ENCODE measurements at regions of chr2 and their contacts with region 1.

Region 1: DNA sequence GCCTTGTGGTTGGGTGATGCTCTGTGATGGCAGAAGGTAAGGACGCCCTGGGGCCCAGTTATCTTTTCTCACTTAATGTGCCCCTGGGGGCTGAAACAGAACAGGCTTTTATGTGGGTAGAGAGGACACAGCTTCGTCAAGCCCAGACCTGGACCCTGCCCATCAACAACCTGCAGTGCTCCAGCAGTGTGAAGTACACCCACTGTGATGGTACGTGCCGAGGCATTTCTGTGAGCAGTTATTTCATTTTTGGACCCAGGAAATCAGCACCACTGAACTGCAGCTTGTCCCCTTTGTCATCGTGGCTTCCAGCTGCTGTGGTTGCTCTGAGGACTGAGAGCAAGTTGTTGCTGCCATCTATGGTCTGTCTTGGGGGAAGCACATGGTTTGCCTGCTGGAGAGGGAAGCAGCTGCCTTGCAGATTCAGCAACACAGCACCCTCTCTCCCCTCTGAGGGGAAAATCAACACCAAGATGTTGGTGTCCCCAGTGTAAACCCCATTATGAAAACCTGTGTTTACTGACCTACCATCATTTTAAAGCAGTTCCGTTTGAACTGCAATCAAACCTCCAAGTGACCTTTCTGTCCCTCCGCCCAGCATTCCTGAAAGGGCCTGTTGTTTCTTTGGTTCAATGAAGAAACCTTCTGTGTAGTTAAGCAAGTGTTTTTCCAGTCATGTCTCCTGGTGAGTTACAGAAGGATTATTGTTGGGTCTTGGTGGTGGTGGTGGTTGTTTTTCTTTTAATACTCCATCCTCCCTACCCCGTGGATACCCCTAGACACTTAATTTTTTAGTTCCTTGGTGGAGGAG is 158.2 kb downstream of the MGAT5 start:
- DNase-seq: peak; percentile 64
- ATAC-seq: peak; percentile 93

Region 2: DNA sequence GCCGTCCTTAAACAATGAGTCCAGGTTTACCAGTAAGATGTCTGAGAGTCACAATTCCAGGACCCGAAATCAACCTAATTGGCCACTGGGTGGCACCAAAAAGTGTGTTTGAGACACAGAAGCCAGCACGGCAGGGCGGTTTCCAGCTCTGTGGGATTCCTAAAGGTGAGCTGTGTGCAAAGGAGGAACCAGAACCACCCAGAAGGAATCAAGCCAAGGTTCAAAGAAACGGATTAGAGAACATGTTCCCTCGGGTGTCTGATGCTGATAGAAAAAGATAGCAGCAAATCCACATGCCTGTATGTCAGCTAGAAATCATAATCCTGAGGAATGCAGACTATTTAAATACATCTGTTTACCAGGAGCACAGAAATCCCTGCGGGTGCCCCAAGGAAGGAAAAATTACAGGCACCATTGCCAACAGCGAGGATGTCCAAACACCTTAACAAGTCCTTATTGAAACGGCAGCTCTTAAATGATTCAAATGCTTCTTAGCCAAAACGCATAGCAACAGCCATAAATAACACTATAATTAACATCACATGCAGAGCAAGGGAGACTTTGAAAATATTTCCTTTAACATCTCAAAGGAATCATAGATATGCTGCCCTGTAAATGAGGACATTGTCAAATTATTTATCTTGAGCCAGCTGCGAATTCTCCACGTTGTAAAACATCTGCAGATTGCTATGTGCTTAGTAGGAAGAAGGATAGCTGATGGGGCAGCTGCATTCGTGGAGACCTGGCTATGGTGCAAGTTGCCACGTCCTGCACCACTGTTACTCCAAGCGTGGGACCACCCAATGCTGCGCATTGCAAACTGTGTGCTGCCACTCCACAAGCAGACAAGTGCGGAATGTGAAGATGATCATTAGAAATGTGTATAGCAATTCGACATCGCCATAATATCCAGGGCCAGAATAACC is 525.0 kb before region 1 on chr2:
- intact Hi-C with region 1: loop called (anchors 5 kb)
- DNase-seq: peak; percentile 79
- ATAC-seq: peak; percentile 88

Region 3: GRCh38 chr2:134261398-134262131 is 150.5 kb before region 1 on chr2:
- intact Hi-C with region 1: loop called (anchors 10 kb)
- DNase-seq: no peak
- ATAC-seq: peak; percentile 46

Region 4: GRCh38 chr2:134623796-134624195 is 211.8 kb after region 1 on chr2:
- intact Hi-C with region 1: no loop called
- DNase-seq: no peak
- ATAC-seq: no peak